ENCODE measurements at regions of chr16 and their contacts with region 1.

Region 1: GRCh38 chr16:82264756-82265155 is 94.7 kb upstream of the MPHOSPH6 start:
- DNase-seq: no peak
- ATAC-seq: no peak
- H3K4me3 ChIP-seq: no peak overlapping the region
- H3K27ac ChIP-seq: no peak overlapping the region
- H3K4me1 ChIP-seq: peaks cover 0 to 10% of the 10 kb centered on the region in 2 donors
- H3K27me3 ChIP-seq: no peaks in the 10 kb centered on the region
- CTCF ChIP-seq: no peak

Region 2: GRCh38 chr16:82344157-82344556 is 79.4 kb after region 1 on chr16:
- intact Hi-C with region 1: loop called in 1 of 2 experiments (anchors 5 kb)
- DNase-seq: no peak
- ATAC-seq: no peak
- H3K4me3 ChIP-seq: no peak overlapping the region
- H3K27ac ChIP-seq: no peak overlapping the region
- H3K4me1 ChIP-seq: no peaks in the 10 kb centered on the region
- H3K27me3 ChIP-seq: no peaks in the 10 kb centered on the region
- CTCF ChIP-seq: peak; percentile 29 to 47